Natural killer cell (primary cell): ENCODE measurements at regions of chr1 and their contacts with region 1.

Region 1: DNA sequence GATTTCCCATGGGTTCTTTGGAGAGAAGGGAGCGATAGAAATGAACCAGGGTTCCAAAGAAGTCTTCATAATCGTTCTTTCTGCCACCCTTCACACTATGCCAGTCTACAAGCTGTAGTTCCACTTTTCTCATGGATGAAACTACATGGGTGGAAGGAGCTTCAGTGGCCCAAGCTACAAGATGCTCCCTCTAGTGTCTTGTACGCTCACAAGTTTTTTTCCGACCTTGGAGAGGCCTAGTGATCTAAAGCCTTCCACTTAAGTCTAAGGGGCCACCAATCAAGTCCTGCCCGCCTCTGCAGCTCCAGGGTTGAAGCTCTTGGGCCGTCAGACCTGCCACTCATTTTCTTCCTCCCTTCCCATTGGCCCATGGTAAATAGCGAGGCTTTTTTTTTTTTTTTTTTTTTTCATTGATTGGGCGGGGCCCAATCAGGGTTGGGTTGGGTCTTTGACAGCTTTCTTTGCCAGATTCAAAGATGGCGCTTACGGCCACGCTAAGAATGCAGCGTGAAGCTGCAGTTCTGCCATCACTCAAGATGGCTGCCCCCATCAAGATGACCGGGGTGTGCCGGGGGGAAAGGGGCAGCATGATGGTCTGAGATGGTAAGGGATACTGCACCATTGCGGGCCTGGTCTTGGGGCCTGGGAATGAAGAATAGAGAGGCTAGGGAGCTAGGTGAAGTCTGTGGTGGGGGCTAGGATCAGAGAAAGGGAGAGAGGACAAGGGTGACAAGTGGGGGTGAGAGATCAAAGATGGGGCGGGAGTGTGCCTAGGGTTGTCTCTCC is at the start of gene TOMM40L:
- DNase-seq: peak; percentile 77 to 97
- ATAC-seq: peak; percentile 90 to 95 (median 94)
- H3K4me3 ChIP-seq: peak within 1 kb of the TSS; percentile 67
- H3K4me3 Mint-ChIP-seq: peak within 1 kb of the TSS; percentile 100
- H3K27ac ChIP-seq: peak within 1 kb of the TSS; percentile 72
- H3K27ac Mint-ChIP-seq: peak within 1 kb of the TSS; percentile 92 to 95
- H3K4me1 ChIP-seq: peaks cover 32% of the 10 kb centered on the region
- H3K4me1 Mint-ChIP-seq: peaks cover 44 to 54% of the 10 kb centered on the region in 2 donors
- H3K27me3 ChIP-seq: no peaks in the 10 kb centered on the region
- H3K27me3 Mint-ChIP-seq: no peaks in the 10 kb centered on the region
- CTCF ChIP-seq: no peak
- total RNA-seq, gene TOMM40L: 16.6 to 23.6 (median 22.8) TPM

Region 2: GRCh38 chr1:161068306-161069234 is 157.2 kb before region 1 on chr1:
- intact Hi-C with region 1: no loop called
- DNase-seq: peak; percentile 73 to 94
- ATAC-seq: peak; percentile 63 to 85 (median 69)
- H3K4me3 ChIP-seq: peak overlapping the region; percentile 91
- H3K4me3 Mint-ChIP-seq: peak overlapping the region; percentile 88
- H3K27ac ChIP-seq: peak overlapping the region; percentile 95
- H3K27ac Mint-ChIP-seq: peak overlapping the region; percentile 89
- H3K4me1 ChIP-seq: peaks cover 72% of the 10 kb centered on the region
- H3K4me1 Mint-ChIP-seq: peaks cover 57 to 90% of the 10 kb centered on the region in 2 donors
- H3K27me3 ChIP-seq: no peaks in the 10 kb centered on the region
- H3K27me3 Mint-ChIP-seq: no peaks in the 10 kb centered on the region
- CTCF ChIP-seq: no peak

Region 3: GRCh38 chr1:161185282-161185682 is 40.4 kb before region 1 on chr1:
- intact Hi-C with region 1: loop called (anchors 1 kb)
- DNase-seq: peak; percentile 60 to 93
- ATAC-seq: peak; percentile 69 to 86 (median 86)
- H3K4me3 ChIP-seq: no peak overlapping the region
- H3K4me3 Mint-ChIP-seq: peak overlapping the region; percentile 75
- H3K27ac ChIP-seq: peak overlapping the region; percentile 83
- H3K27ac Mint-ChIP-seq: peak overlapping the region; percentile 95 to 97
- H3K4me1 ChIP-seq: peaks cover 72% of the 10 kb centered on the region
- H3K4me1 Mint-ChIP-seq: peaks cover 79 to 80% of the 10 kb centered on the region in 2 donors
- H3K27me3 ChIP-seq: no peaks in the 10 kb centered on the region
- H3K27me3 Mint-ChIP-seq: no peaks in the 10 kb centered on the region
- CTCF ChIP-seq: no peak

Region 4: DNA sequence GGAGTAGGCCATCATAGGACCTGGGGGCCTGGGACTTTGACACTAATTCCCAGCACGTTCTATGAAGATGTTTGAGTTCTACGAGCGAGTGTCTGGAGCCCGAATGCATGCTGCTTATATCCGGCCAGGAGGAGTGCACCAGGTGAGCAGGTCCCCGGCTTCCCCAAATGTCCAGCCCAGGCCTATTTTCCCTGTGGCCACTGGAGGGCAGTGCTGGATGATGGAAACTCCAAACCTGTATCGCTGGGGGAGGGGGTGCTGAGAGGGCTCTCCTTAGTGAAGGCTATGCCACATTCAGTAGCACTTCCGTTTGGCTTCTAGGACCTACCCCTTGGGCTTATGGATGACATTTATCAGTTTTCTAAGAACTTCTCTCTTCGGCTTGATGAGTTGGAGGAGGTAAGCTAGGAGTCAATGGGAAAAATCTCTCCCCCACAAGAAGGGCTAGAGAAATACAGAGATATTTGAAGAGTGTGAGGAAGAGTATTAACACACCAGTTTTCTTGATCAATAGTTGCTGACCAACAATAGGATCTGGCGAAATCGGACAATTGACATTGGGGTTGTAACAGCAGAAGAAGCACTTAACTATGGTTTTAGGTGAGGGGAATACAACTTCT is 15.8 kb before region 1 on chr1:
- intact Hi-C with region 1: loop called (anchors 1 kb)
- DNase-seq: peak; percentile 74 to 86
- ATAC-seq: peak; percentile 96 to 100 (median 99)
- H3K4me3 ChIP-seq: no peak overlapping the region
- H3K4me3 Mint-ChIP-seq: peak overlapping the region; percentile 52
- H3K27ac ChIP-seq: no peak overlapping the region
- H3K27ac Mint-ChIP-seq: peak overlapping the region; percentile 77 to 87
- H3K4me1 ChIP-seq: peaks cover 16% of the 10 kb centered on the region
- H3K4me1 Mint-ChIP-seq: peaks cover 38 to 45% of the 10 kb centered on the region in 2 donors
- H3K27me3 ChIP-seq: no peaks in the 10 kb centered on the region
- H3K27me3 Mint-ChIP-seq: no peaks in the 10 kb centered on the region
- CTCF ChIP-seq: peak; percentile 77

Region 5: GRCh38 chr1:161305867-161306519 is 80.3 kb after region 1 on chr1:
- intact Hi-C with region 1: loop called (anchors 5 kb)
- DNase-seq: peak; percentile 70 to 94
- ATAC-seq: peak; percentile 88 to 96 (median 94)
- H3K4me3 ChIP-seq: peak overlapping the region; percentile 78
- H3K4me3 Mint-ChIP-seq: peak overlapping the region; percentile 97
- H3K27ac ChIP-seq: peak overlapping the region; percentile 74
- H3K27ac Mint-ChIP-seq: peak overlapping the region; percentile 90 to 96
- H3K4me1 ChIP-seq: peaks cover 28% of the 10 kb centered on the region
- H3K4me1 Mint-ChIP-seq: peaks cover 28% of the 10 kb centered on the region in 2 donors
- H3K27me3 ChIP-seq: no peaks in the 10 kb centered on the region
- H3K27me3 Mint-ChIP-seq: no peaks in the 10 kb centered on the region
- CTCF ChIP-seq: no peak

Region 6: GRCh38 chr1:161359291-161359690 is 133.6 kb after region 1 on chr1:
- intact Hi-C with region 1: no loop called
- DNase-seq: no peak
- ATAC-seq: no peak
- H3K4me3 ChIP-seq: no peak overlapping the region
- H3K4me3 Mint-ChIP-seq: no peak overlapping the region
- H3K27ac ChIP-seq: no peak overlapping the region
- H3K27ac Mint-ChIP-seq: no peak overlapping the region
- H3K4me1 ChIP-seq: no peaks in the 10 kb centered on the region
- H3K4me1 Mint-ChIP-seq: peaks cover 0 to 7% of the 10 kb centered on the region in 2 donors
- H3K27me3 ChIP-seq: no peaks in the 10 kb centered on the region
- H3K27me3 Mint-ChIP-seq: no peaks in the 10 kb centered on the region
- CTCF ChIP-seq: no peak

Region 7: GRCh38 chr1:161382214-161383019 is 156.7 kb after region 1 on chr1:
- intact Hi-C with region 1: loop called (anchors 1 kb)
- DNase-seq: peak in 1 of 2 donors; percentile 73
- ATAC-seq: peak; percentile 88 to 92 (median 90)
- H3K4me3 ChIP-seq: no peak overlapping the region
- H3K4me3 Mint-ChIP-seq: no peak overlapping the region
- H3K27ac ChIP-seq: no peak overlapping the region
- H3K27ac Mint-ChIP-seq: no peak overlapping the region
- H3K4me1 ChIP-seq: no peaks in the 10 kb centered on the region
- H3K4me1 Mint-ChIP-seq: peaks cover 0 to 8% of the 10 kb centered on the region in 2 donors
- H3K27me3 ChIP-seq: no peaks in the 10 kb centered on the region
- H3K27me3 Mint-ChIP-seq: no peaks in the 10 kb centered on the region
- CTCF ChIP-seq: peak; percentile 79